Cardiac septum (tissue), 1 donor: ENCODE measurements at regions of chr16 and their contacts with region 1.

Region 1: GRCh38 chr16:28211712-28212534 is at the start of gene XPO6:
- DNase-seq: peak; percentile 99
- total RNA-seq, gene XPO6: 43.9 TPM

Region 2: DNA sequence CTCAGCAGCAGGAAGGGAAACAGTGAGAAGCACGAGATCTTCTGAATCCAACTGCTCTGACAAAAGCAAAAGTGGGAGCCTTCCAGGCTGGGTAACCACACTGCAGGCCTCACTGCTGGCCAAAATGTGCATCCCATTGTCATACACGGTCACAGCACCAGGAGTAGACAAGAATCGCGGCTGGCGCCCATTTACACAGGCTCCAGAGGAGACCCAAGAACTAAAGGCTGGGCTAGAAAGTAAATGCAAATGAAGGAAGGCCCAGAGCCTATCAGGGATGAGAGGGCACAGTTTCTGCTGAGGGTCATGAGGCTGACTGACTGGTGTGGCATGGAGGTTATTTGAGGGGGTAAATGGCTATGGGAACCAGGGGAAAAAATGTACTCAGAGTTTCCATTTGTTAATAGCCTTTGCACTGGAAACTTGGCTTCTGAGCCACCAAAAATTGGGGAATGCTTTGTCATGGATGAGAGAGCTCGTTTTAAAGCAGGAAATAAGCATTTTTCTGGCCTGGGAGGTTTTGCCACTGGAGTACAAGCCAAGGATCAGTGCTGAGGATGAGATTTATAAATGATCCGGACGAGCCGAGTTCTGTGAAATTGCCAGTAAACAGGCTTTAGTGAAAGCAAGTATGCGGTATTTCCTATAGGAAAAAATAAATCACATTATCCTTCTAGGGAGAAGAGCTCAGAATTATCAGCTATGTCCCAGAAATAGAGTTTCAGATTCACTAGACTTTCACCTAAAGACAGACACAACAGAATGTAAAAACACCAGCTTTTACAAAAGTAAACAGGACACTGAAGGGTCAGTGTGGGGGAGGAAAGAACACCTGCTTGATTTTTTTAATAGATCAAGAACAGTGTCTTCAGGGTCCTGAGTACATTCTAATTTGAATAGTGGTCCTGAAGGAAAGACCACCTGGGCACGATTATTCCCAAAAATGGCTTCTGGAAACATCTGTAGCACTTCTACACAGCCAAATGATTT is 81.5 kb before region 1 on chr16:
- intact Hi-C with region 1: no loop called
- DNase-seq: no peak

Region 3: GRCh38 chr16:28164140-28164539 is 47.8 kb before region 1 on chr16:
- intact Hi-C with region 1: loop called (anchors 5 kb)
- DNase-seq: no peak

Region 4: DNA sequence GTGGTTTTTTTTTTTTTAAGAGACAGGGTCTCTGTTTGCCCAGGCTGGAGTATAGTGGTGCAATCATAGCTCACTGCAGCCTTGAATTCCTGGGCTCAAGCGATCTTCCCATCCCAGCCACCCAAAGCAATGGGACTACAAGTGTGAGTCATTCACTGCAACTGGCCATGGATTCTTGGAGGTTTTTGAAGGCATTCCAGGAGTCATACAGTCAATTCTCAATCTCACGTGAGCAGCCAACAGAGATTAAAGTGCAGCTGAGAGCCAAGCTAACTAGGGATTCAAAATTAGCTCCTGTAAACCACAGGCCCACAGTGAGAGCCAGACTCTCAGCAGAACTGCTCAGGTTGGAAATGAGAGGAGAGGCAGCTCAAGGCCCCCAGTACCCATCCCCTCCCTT is 30.4 kb before region 1 on chr16:
- intact Hi-C with region 1: loop called (anchors 1 kb)
- DNase-seq: no peak

Region 5: GRCh38 chr16:28258567-28258966 is 46.6 kb after region 1 on chr16:
- intact Hi-C with region 1: no loop called
- DNase-seq: no peak

Region 6: GRCh38 chr16:28609631-28610594 is 398.0 kb after region 1 on chr16 and contains the start of gene SULT1A1:
- intact Hi-C with region 1: no loop called
- DNase-seq: peak; percentile 83
- total RNA-seq, gene SULT1A1: 23.2 TPM